Posterior cingulate gyrus (tissue), 11 donors: ENCODE measurements at regions of chr5 and their contacts with region 1.

Region 1: GRCh38 chr5:39566891-39567290 is 142.1 kb upstream of the DAB2 start:
- DNase-seq: no peak

Region 2: GRCh38 chr5:39217365-39218281 is 349.3 kb before region 1 on chr5:
- intact Hi-C with region 1: loop called (anchors 5 kb)
- DNase-seq: peak in 9 of 10 donors; percentile 34 to 91 (median 64)